Posterior vena cava (tissue), 2 donors: ENCODE measurements at regions of chr10 and their contacts with region 1.

Region 1: DNA sequence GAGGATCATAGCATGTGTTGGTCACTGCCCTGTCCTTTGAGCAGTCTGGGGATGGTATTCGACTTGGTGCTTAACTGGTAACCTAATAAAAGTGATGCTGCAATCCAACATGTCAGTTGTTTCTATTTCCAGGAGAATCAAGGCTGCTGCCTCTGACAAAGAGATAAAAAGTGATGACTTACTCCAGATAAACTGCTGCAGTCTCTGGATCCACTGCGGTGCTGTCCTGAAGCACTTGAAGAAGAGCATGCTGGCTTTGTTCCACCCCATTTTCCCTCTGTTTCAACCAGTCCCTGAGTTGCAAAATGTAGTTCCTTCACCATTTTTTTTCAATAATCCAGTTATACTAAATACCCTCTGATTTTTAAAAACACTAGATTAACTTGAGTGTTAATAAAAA is 403.5 kb upstream of the ANKRD30A start:
- DNase-seq: no peak

Region 2: DNA sequence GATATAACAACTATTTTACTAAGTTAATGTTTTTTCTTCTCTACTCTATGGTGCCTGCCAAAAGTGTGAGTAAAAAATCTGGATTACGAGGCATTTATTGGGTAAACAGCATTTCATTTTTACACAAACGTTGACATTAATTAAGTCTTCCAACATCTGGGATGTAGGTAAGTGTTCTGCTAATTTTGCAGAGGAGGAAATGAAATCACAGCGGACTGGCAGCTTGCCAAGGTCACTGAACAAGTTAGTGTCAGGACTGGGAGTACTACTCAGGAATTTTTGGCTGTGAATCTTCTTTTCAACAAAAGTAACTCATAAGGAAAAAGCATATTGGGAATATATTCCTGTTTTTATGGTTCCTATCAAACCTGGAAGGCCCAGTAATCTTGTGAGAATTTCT is 467.7 kb before region 1 on chr10:
- intact Hi-C with region 1: no loop called
- DNase-seq: peak; percentile 86

Region 3: GRCh38 chr10:36688717-36689116 is 33.2 kb before region 1 on chr10:
- intact Hi-C with region 1: loop called in 1 of 2 experiments (anchors 1 kb)
- DNase-seq: no peak

Region 4: GRCh38 chr10:36880898-36881297 is 159.0 kb after region 1 on chr10:
- intact Hi-C with region 1: no loop called
- DNase-seq: no peak